ENCODE measurements at regions of chr7 and their contacts with region 1.

Region 1: DNA sequence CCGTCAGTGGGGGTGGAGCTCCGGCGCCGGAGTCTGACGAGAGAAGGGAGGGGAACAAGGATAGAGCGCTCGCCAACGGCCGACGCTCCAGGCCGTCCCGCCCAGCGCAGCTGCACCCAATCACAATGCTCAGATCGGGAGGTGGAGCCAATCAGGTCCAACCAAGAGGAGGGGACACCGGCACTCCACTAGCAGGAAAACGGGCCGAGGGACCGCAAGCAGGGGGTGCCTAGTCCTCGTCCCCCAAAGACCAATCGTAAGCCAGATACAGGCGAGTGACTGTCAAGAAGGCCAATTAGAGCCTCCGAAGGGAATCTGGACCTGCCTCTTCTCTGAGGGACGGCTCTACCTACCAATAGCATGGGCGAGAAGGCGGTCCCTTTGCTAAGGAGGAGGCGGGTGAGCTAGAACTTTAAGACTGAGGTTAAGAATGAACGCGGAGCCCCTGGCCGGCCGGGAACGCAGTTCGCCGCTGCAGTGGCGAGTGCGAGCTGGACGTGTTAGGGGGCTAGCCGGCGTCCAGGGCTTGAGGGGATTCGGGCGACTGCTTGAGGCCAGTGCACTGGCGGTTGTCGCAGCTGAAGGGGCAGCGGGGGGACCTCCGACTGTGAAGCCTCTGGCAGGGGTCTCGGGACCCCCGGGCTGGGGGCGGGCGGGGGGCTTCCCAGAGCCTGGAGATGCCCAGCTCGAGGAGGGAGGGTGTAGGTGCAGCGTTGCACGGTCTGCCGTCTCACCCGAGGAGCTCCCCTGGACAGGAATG is at the start of gene FBXO24:
- DNase-seq: peak; percentile 99
- ATAC-seq: peak; percentile 85
- H3K4me3 Mint-ChIP-seq: peak within 1 kb of the TSS; percentile 99
- H3K27ac Mint-ChIP-seq: peak within 1 kb of the TSS; percentile 100
- H3K4me1 Mint-ChIP-seq: peaks cover 42% of the 10 kb centered on the region
- H3K27me3 Mint-ChIP-seq: peaks cover 30% of the 10 kb centered on the region
- CTCF ChIP-seq: no peak
- total RNA-seq, gene FBXO24: 0.70 to 1.3 TPM (median 0.94 TPM) in 3 replicates

Region 2: DNA sequence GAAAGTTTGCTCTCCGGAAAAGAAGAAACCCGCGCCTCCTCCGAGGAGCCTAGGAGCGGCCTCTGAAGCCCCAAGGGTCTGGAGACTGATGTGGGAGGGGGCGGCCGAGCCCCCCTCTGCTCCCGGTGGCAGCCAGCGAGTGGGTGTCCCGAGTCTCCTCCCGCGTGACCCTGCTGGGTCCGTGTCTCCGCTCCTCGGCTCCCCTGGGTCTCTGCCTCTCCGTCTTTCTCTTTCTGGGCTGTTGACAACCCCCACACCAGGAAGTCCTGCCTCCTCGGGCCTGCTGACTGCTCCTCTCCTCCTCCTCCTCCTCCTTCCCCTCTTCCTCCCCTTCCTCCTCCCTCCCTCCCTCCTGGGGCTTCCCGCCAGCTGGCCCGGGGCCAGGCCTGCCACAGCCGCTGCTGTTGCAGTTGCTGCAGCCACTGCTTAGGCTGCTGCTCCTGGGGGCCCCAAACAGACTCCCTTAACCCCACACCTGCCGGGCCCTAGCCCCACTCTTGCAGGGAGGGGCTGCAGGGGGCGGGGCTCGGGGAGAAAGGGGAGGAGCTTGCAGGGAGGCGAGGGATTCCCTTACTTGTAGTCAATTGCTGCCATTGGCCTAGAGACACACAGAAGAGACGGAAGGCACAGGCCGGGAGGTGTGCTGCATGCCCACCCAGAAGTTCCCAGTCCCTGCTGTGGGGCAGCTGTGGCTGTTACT is 107.3 kb before region 1 on chr7 and contains the start of gene TSC22D4:
- CTCF ChIA-PET with region 1: interaction called, 11 read pairs
- POLR2A ChIA-PET with region 1: interaction called, 4 read pairs
- DNase-seq: peak; percentile 96
- ATAC-seq: peak; percentile 70
- H3K4me3 Mint-ChIP-seq: peak within 1 kb of the TSS; percentile 78
- H3K27ac Mint-ChIP-seq: peak within 1 kb of the TSS; percentile 92
- H3K4me1 Mint-ChIP-seq: peaks cover 20% of the 10 kb centered on the region
- H3K27me3 Mint-ChIP-seq: no peaks in the 10 kb centered on the region
- CTCF ChIP-seq: no peak
- total RNA-seq, gene TSC22D4: 27.5 to 34.5 TPM (median 29.7 TPM) in 3 replicates

Region 3: DNA sequence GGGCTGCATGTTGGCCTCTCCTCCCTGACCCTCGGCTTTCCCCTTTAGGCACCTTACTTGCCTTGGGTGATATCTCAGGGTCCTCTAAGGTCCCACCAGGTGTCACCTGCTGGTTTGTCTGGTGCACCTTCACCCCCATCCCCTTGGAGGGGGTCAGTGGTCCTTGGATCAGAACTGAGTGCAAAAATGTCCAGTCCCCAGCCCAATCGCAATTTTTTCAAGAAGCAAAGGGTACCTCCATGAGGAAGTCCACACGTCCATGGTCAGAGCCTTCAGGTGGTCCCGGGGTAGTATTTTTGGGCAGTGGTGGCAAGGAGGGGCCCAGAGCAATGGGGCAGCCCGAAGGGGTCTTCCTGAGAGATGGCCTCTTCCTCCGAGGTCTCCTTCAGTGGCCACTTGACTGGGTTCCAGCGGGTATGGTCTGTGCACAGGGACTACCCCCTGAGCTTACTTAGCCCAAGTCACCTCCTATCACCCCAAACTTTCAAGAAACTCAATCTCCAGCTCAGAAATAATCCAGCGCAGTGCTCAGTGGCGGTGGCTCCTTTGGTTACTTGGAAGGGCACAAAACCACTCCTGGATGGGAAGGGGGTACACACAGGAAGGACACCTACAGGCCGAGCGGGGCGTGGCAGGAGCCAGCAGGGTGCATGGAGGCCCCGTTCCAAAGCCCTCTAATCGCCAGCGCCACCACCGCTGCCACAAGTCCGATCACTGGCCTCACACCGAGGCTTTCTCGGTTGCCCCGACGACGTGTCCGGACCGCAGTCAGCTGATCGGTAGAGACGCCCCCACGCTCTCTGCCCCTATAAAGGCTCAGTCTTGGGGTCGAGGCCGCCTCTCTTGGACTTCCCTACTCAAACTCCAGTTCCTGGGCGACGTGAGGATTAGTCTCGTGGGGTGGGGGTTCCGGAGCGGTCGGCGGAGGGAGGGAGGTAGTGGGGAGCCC is 17.3 kb before region 1 on chr7:
- CTCF ChIA-PET with region 1: interaction called, 51 read pairs
- POLR2A ChIA-PET with region 1: interaction called, 24 read pairs
- DNase-seq: peak; percentile 85
- ATAC-seq: peak; percentile 67
- H3K4me3 Mint-ChIP-seq: peak overlapping the region; percentile 61
- H3K27ac Mint-ChIP-seq: peak overlapping the region; percentile 67; the same call in 1 of the 2 replicates
- H3K4me1 Mint-ChIP-seq: peaks cover 46% of the 10 kb centered on the region
- H3K27me3 Mint-ChIP-seq: peaks cover 11% of the 10 kb centered on the region
- CTCF ChIP-seq: peak; percentile 32; the same call in 1 of the 2 replicates

Region 4: DNA sequence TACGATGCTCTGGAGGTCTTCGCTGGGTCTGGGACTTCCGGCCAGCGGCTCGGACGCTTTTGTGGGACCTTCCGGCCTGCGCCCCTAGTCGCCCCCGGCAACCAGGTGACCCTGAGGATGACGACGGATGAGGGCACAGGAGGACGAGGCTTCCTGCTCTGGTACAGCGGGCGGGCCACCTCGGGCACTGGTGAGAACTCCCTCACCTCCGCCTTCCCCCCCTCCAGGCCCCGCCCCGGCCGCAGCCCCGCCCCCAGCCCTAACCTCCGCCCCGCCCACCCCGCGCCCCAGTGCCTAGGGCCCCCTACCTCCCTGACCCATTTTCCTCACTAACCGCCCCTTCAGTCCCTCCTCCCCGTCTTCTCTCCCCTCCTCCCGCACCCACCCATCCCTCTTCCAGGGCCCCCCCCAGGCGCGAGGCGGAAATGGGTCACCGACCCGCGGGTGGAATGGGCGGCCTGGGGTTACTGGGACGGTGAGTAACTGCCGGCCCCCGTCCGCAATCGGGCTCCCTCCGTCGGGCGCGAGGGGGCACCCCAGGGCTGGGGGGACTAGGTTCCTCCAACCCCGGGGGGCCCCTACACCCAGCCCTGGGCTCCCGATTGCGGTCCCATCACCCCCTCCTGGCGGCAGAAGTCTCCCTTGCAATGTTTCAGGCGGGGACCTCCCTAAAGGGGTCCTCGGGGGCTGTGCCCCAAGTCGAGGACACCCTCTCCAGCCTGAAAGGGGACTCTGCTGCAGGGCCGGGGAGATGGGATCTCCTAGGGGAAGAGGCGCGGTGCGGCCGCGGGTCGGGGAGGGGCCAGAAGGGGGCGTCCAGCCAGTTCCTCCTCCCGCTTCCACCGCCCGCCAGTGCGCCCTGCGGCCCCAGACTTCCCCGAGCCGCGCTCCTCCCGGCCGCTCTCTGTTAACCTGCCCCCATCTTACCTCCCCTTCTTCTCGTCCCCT is 17.9 kb after region 1 on chr7:
- CTCF ChIA-PET with region 1: interaction called, 67 read pairs
- POLR2A ChIA-PET with region 1: interaction called, 60 read pairs
- DNase-seq: peak; percentile 90
- ATAC-seq: peak; percentile 71
- H3K4me3 Mint-ChIP-seq: peak overlapping the region; percentile 87
- H3K27ac Mint-ChIP-seq: peak overlapping the region; percentile 96
- H3K4me1 Mint-ChIP-seq: peaks cover 43% of the 10 kb centered on the region
- H3K27me3 Mint-ChIP-seq: peaks cover 13% of the 10 kb centered on the region
- CTCF ChIP-seq: peak; percentile 48; the same call in 1 of the 2 replicates

Region 5: DNA sequence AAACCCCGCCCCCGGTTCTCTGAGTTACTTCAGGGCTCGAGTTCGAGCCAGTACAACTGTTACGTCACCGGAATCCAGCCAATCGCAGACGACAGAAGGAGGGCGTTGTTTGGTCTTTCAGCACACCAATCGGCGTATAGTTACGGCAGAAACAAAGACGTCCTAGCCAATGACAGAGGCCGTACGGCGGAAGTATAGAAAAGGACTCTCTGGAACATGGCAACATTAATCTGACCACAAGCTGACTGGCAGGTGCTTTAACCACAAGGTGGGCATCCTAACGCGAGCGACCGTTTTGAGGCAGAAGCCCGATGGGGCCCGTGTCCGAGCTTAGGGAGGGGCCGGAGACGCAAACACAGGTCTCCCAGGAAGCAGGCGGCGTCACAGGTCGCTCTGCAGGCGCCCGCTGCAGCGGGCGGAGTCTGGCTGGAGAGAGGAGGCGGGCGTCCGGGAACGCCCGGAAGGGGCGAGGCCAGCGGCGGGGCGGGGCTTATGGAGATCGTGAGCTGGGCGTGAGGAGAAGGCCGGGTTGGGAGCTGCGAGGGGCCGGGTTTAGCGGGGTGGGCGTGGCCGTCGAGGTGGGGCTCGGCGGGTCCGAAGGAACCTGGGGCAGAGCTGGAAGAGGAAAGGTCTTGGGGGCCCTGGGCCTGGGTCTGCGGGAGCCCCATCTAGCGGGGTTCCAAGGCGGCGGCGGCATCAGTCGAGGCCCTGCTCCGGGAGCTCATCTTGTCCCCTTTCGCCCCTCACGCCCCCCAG is 25.7 kb after region 1 on chr7 and contains the start of gene MOSPD3:
- CTCF ChIA-PET with region 1: interaction called, 19 read pairs
- POLR2A ChIA-PET with region 1: interaction called, 22 read pairs
- DNase-seq: peak; percentile 99
- ATAC-seq: peak; percentile 93
- H3K4me3 Mint-ChIP-seq: peak within 1 kb of the TSS; percentile 94
- H3K27ac Mint-ChIP-seq: peak within 1 kb of the TSS; percentile 100
- H3K4me1 Mint-ChIP-seq: peaks cover 6% of the 10 kb centered on the region; the same call in 1 of the 2 replicates
- H3K27me3 Mint-ChIP-seq: no peaks in the 10 kb centered on the region; the same call in 1 of the 2 replicates
- CTCF ChIP-seq: no peak
- total RNA-seq, gene MOSPD3: 21.9 to 22.4 TPM (median 22.0 TPM) in 3 replicates

Region 6: GRCh38 chr7:100626530-100627237 is 40.2 kb after region 1 on chr7:
- CTCF ChIA-PET with region 1: interaction called, 10 read pairs
- POLR2A ChIA-PET with region 1: no interaction called
- DNase-seq: peak; percentile 87
- ATAC-seq: peak; percentile 89
- H3K4me3 Mint-ChIP-seq: peak overlapping the region; percentile 65
- H3K27ac Mint-ChIP-seq: no peak overlapping the region
- H3K4me1 Mint-ChIP-seq: peaks cover 7% of the 10 kb centered on the region
- H3K27me3 Mint-ChIP-seq: peaks cover 22% of the 10 kb centered on the region
- CTCF ChIP-seq: no peak